PC-9 (cell line): ENCODE measurements at regions of chr5 and their contacts with region 1.

Region 1: GRCh38 chr5:73617510-73618279 is 8.3 kb upstream of the ARHGEF28 start:
- DNase-seq: peak in 1 of 2 experiments; percentile 43
- H3K4me3 ChIP-seq: no peak overlapping the region
- H3K27ac ChIP-seq: no peak overlapping the region
- H3K4me1 ChIP-seq: peaks cover 29% of the 10 kb centered on the region
- H3K27me3 ChIP-seq: no peaks in the 10 kb centered on the region
- CTCF ChIP-seq: no peak

Region 2: GRCh38 chr5:73654171-73654811 is 36.6 kb after region 1 on chr5:
- CTCF ChIA-PET with region 1: no interaction called
- POLR2A ChIA-PET with region 1: no interaction called
- intact Hi-C with region 1: loop called (anchors 5 kb)
- DNase-seq: peak; percentile 61 to 96
- H3K4me3 ChIP-seq: no peak overlapping the region
- H3K27ac ChIP-seq: peak overlapping the region; percentile 96
- H3K4me1 ChIP-seq: peaks cover 65% of the 10 kb centered on the region
- H3K27me3 ChIP-seq: no peaks in the 10 kb centered on the region
- CTCF ChIP-seq: no peak